Activated CD4-positive, alpha-beta memory T cell treated with anti-CD3 and anti-CD28 coated beads for 36 hours (primary cell): ENCODE measurements at regions of chr21 and their contacts with region 1.

Region 1: DNA sequence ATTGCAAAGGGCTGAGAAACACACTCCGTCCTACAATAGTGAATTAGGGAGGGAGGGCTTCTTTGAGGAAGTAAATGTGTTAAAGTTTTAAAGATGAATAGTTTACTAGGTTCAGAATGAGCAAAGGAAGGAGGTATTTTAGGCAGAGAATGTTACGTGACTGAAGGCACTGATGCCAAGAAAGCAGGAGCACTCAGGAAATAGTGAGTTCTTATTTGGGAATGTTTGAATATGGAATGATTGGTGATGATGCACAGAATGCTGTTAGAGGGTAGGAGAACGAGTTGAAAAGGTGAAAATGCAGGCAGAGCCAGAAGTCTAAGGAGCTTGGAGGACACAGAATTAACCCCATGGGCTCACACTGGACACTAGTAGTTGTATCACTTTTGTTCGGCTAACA is 108.0 kb downstream of the NRIP1 start:
- DNase-seq: no peak
- H3K4me3 Mint-ChIP-seq: no peak overlapping the region
- H3K27ac Mint-ChIP-seq: no peak overlapping the region
- H3K4me1 Mint-ChIP-seq: no peaks in the 10 kb centered on the region
- H3K27me3 Mint-ChIP-seq: no peaks in the 10 kb centered on the region

Region 2: DNA sequence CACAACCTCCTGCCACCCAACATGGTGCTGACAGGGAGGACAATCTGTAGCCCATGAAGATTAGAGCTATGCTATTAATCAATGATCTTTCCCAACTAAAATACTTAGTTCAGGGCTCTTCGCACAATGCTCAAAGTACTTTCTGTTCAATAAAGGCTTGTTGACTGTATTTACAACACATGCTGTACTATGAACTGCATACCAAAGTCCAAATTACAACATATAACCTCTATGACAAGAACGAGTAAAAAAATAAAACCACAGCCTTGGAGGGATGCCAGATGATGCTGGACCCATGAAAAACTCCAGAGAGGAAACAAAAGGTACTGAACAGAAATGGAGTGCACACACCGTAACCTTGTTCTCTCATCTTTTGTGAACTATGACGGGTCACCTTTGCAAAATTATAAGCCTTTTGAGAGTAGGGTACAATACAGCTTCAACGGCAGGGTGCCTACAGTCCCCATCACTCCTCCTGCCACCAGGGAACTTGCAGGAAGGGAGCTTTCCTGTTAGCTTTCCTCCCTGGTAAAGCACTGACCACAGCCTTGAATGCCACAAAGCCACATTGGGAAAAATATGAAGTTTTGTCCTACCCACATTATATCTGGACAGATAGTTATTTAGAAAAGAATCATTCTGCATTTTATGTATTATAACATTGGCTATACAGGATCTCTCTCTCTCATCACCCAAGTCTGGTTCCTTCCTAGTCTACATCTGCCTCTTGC is 67.6 kb before region 1 on chr21:
- CTCF ChIA-PET with region 1: no interaction called
- POLR2A ChIA-PET with region 1: no interaction called
- intact Hi-C with region 1: no loop called
- DNase-seq: no peak
- H3K4me3 Mint-ChIP-seq: no peak overlapping the region
- H3K27ac Mint-ChIP-seq: no peak overlapping the region
- H3K4me1 Mint-ChIP-seq: no peaks in the 10 kb centered on the region
- H3K27me3 Mint-ChIP-seq: no peaks in the 10 kb centered on the region

Region 3: GRCh38 chr21:15015622-15016471 is 59.0 kb after region 1 on chr21:
- CTCF ChIA-PET with region 1: no interaction called
- POLR2A ChIA-PET with region 1: no interaction called
- intact Hi-C with region 1: loop called (anchors 10 kb)
- DNase-seq: no peak
- H3K4me3 Mint-ChIP-seq: no peak overlapping the region
- H3K27ac Mint-ChIP-seq: no peak overlapping the region
- H3K4me1 Mint-ChIP-seq: peaks cover 14% of the 10 kb centered on the region
- H3K27me3 Mint-ChIP-seq: no peaks in the 10 kb centered on the region